WTC11 (cell line): ENCODE measurements at regions of chr20 and their contacts with region 1.

Region 1: GRCh38 chr20:10466325-10466724 is 31.2 kb downstream of the SLX4IP start:
- DNase-seq: peak; percentile 58
- ATAC-seq: peak; percentile 82
- H3K4me3 Mint-ChIP-seq: peak overlapping the region; percentile 48
- H3K27ac Mint-ChIP-seq: peak overlapping the region; percentile 99
- H3K4me1 Mint-ChIP-seq: peaks cover 81% of the 10 kb centered on the region
- H3K27me3 Mint-ChIP-seq: no peaks in the 10 kb centered on the region
- CTCF ChIP-seq: no peak

Region 2: DNA sequence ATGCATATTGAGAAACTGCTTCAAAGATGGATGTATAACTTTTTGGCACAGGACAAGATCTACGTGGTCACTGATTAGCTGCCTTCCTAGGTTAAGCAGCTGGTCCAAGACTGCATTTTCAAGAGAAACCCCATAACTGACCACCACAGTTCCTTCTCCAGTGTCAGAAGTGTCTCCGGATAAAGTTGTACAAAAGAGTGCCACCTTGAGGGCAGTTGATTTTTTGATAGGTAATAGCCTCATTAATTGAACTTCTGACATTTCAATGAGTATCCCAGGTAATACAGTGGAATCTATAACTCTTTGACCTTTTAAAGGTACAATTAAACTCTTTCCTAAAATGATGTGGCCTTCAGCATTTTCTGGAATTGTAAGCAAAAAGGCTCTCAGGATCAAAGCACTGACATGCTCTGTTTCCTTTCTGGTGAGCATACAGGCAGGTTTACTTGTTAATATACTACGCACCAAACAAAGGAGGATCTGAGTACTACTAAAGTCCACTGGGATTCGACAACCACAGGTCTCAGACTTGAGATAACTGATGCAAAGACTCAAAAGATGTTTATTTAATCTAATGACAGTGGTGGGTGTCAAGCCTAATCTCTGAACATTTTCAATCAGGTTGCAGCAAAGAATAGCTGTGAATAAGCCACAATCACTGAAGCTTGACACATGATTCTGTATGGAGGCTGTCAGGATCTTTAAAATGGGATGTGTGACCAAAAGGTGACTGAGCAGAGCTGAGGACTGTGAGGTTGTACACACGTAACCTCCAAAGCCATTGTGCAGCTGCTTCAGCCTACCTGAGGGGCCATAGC is 53.5 kb before region 1 on chr20:
- CTCF ChIA-PET with region 1: no interaction called
- POLR2A ChIA-PET with region 1: no interaction called
- DNase-seq: no peak
- ATAC-seq: no peak
- H3K4me3 Mint-ChIP-seq: no peak overlapping the region
- H3K27ac Mint-ChIP-seq: no peak overlapping the region
- H3K4me1 Mint-ChIP-seq: peaks cover 17% of the 10 kb centered on the region
- H3K27me3 Mint-ChIP-seq: no peaks in the 10 kb centered on the region
- CTCF ChIP-seq: no peak

Region 3: GRCh38 chr20:10553326-10553984 is 87.1 kb after region 1 on chr20:
- CTCF ChIA-PET with region 1: interaction called, 11 read pairs
- POLR2A ChIA-PET with region 1: no interaction called
- DNase-seq: peak; percentile 64
- ATAC-seq: peak; percentile 49; the same call in 1 of the 2 replicates
- H3K4me3 Mint-ChIP-seq: no peak overlapping the region; the same call in 1 of the 2 replicates
- H3K27ac Mint-ChIP-seq: peak overlapping the region; percentile 74; the same call in 1 of the 2 replicates
- H3K4me1 Mint-ChIP-seq: peaks cover 75% of the 10 kb centered on the region
- H3K27me3 Mint-ChIP-seq: no peaks in the 10 kb centered on the region
- CTCF ChIP-seq: peak; percentile 31; the same call in 1 of the 2 replicates